SK-N-SH (cell line): ENCODE measurements at regions of chr3 and their contacts with region 1.

Region 1: DNA sequence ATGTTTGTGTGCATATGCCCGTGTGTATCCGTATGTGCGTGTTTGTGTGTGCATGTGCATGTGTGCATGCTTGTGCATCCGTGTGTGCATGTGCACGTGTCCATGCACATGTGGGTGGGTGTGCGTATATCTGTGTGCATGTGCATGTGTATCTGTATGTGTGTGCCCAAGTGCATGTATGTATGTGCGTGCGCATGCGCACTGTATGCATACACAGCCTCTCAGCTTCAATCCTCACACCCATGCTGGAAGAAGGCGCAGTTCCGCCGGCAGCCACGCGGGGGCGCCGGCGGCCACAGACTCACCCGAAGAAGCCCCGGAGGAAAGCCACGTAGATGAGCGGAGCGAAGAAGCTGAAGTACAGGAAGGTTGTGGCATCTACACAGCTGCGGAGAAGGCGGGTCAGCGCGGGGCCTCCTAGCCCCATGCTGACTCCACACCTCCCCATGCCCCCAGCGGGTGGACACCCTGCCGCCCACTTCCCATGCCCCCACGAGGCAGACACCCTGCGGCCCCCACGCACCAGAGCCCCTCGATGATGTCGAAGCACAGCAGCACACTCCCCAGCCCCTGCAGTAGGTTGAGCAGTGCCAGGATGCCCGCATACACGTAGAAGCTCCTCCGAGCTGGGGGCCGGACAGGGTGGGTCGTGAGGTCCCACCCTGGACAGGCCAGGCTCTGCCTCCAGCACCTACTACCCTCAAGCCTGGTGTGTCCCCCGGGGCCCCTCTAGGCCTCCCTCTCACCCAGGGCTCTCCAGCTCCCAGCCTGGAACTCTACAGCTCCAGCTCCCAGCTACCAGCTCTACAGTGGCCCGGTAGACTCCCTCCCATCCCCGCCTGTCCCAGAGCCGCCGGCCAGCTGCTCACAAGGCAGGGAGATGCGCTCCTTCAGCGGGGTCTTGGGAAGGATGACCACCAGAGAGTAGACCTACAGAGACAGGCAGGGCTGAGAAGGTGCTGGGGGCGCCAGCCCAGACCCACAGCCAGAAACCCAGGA is 15.4 kb downstream of the TPRA1 start:
- DNase-seq: peak; percentile 97
- H3K4me3 ChIP-seq: peak overlapping the region in 1 of 2 experiments; percentile 23; a peak in 1 of 4 replicates
- H3K27ac ChIP-seq: no peak overlapping the region
- H3K4me1 ChIP-seq: peaks cover 0 to 7% of the 10 kb centered on the region in 2 experiments; a peak in 1 of 4 replicates
- H3K27me3 ChIP-seq: no peaks in the 10 kb centered on the region
- CTCF ChIP-seq: peak; percentile 98
- EP300 ChIP-seq: no peak
- RAD21 ChIP-seq: peak; percentile 85

Region 2: GRCh38 chr3:127556565-127556964 is 18.6 kb before region 1 on chr3:
- CTCF ChIA-PET with region 1: interaction called, 24 read pairs
- POLR2A ChIA-PET with region 1: no interaction called
- DNase-seq: no peak
- H3K4me3 ChIP-seq: no peak overlapping the region
- H3K27ac ChIP-seq: no peak overlapping the region
- H3K4me1 ChIP-seq: peaks cover 0 to 13% of the 10 kb centered on the region in 2 experiments; a peak in 2 of 4 replicates
- H3K27me3 ChIP-seq: no peaks in the 10 kb centered on the region
- CTCF ChIP-seq: peak; percentile 32
- EP300 ChIP-seq: no peak
- RAD21 ChIP-seq: 0 out of 2 replicates have a peak, but pooled peaks have one; percentile 8

Region 3: GRCh38 chr3:127598841-127599570 is 23.8 kb after region 1 on chr3:
- CTCF ChIA-PET with region 1: interaction called, 34 read pairs
- POLR2A ChIA-PET with region 1: interaction called, 4 read pairs
- DNase-seq: no peak
- H3K4me3 ChIP-seq: peak overlapping the region; percentile 69 to 76
- H3K27ac ChIP-seq: peak overlapping the region; percentile 22 to 64; a peak in 3 of 4 replicates
- H3K4me1 ChIP-seq: peaks cover 6 to 19% of the 10 kb centered on the region in 2 experiments; a peak in 3 of 4 replicates
- H3K27me3 ChIP-seq: no peaks in the 10 kb centered on the region
- CTCF ChIP-seq: no peak
- EP300 ChIP-seq: no peak
- RAD21 ChIP-seq: no peak

Region 4: GRCh38 chr3:127646501-127647046 is 71.4 kb after region 1 on chr3:
- CTCF ChIA-PET with region 1: interaction called, 14 read pairs
- POLR2A ChIA-PET with region 1: no interaction called
- DNase-seq: peak; percentile 73
- H3K4me3 ChIP-seq: no peak overlapping the region
- H3K27ac ChIP-seq: peak overlapping the region in 1 of 2 experiments; percentile 34; a peak in 2 of 4 replicates
- H3K4me1 ChIP-seq: peaks cover 0 to 25% of the 10 kb centered on the region in 2 experiments; a peak in 2 of 4 replicates
- H3K27me3 ChIP-seq: no peaks in the 10 kb centered on the region
- CTCF ChIP-seq: no peak
- EP300 ChIP-seq: peak in 1 of 2 experiments; percentile 19; a peak in 1 of 4 replicates
- RAD21 ChIP-seq: 0 out of 2 replicates have a peak, but pooled peaks have one; percentile 1

Region 5: GRCh38 chr3:127970966-127971592 is 395.9 kb after region 1 on chr3:
- CTCF ChIA-PET with region 1: interaction called, 23 read pairs
- POLR2A ChIA-PET with region 1: no interaction called
- DNase-seq: peak; percentile 51
- H3K4me3 ChIP-seq: peak overlapping the region in 1 of 2 experiments; percentile 33; a peak in 1 of 4 replicates
- H3K27ac ChIP-seq: no peak overlapping the region
- H3K4me1 ChIP-seq: peaks cover 0 to 9% of the 10 kb centered on the region in 2 experiments; a peak in 2 of 4 replicates
- H3K27me3 ChIP-seq: peaks cover 6% of the 10 kb centered on the region; the same call in 1 of the 2 replicates
- CTCF ChIP-seq: peak; percentile 73
- EP300 ChIP-seq: no peak
- RAD21 ChIP-seq: peak; percentile 91